Psoas muscle (tissue), 8 donors: ENCODE measurements at regions of chr2 and their contacts with region 1.

Region 1: GRCh38 chr2:67840460-67841068 is 222.2 kb downstream of the C1D start:
- DNase-seq: peak; percentile 53 to 83
- ATAC-seq: peak; percentile 89 to 99 (median 96)
- H3K4me3 ChIP-seq: no peak overlapping the region
- H3K27ac ChIP-seq: no peak overlapping the region
- H3K4me1 ChIP-seq: no peaks in the 10 kb centered on the region
- H3K27me3 ChIP-seq: no peaks in the 10 kb centered on the region
- CTCF ChIP-seq: peak; percentile 91

Region 2: GRCh38 chr2:66574701-66575624 is 1265.6 kb before region 1 on chr2:
- intact Hi-C with region 1: loop called (anchors 10 kb)
- DNase-seq: peak; percentile 56 to 65
- ATAC-seq: peak; percentile 55 to 73 (median 64)
- H3K4me3 ChIP-seq: peak overlapping the region; percentile 66
- H3K27ac ChIP-seq: no peak overlapping the region
- H3K4me1 ChIP-seq: peaks cover 15% of the 10 kb centered on the region
- H3K27me3 ChIP-seq: peaks cover 0 to 61% (median 28%) of the 10 kb centered on the region in 3 donors
- CTCF ChIP-seq: peak; percentile 31

Region 3: DNA sequence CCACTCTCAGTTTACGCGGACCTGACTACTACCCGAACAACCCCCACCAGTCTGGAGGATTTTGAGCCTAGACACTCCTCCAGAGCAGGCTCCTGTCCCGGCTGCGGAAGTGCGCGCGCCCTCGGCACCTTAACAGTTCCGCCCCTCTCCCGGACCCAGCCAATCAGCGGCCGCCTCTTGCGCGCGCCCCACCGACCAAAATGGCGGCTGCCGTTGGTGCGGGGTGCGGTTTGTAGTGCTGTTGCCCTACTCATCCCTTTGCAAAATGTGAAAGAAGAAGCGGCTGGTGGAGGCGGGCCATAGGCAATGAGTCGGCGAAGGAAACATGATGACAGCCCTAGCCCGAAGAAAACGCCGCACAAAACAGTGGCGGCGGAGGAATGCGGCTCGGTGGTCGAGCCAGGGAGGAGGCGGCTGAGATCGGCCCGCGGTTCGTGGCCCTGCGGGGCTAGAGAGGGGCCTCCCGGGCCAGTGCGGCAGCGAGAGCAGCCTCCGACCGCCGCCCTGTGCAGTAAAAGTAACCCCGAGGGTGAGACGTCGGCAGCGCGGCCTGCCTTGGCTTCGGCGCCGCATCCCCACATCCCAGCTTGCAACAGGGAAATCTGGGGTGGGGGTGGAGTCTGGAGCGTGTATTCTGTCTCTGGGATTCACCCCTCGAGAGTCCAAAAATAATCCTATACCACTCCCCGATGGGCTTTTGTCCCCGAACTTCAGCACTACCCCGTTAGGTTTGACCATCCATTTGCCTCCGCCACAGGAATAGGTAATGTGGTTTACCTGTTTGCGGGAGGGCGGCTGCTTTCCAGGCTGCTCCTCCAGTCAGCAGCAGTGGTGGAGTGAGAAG is 443.2 kb before region 1 on chr2 and contains the start of gene ETAA1:
- intact Hi-C with region 1: loop called in 1 of 2 experiments (anchors 10 kb)
- DNase-seq: peak; percentile 94 to 96
- ATAC-seq: peak; percentile 100
- H3K4me3 ChIP-seq: peak within 1 kb of the TSS; percentile 97
- H3K27ac ChIP-seq: peak within 1 kb of the TSS; percentile 91
- H3K4me1 ChIP-seq: peaks cover 4% of the 10 kb centered on the region
- H3K27me3 ChIP-seq: no peaks in the 10 kb centered on the region
- CTCF ChIP-seq: no peak
- total RNA-seq, gene ETAA1: 2.7 to 3.6 (median 2.9) TPM

Region 4: DNA sequence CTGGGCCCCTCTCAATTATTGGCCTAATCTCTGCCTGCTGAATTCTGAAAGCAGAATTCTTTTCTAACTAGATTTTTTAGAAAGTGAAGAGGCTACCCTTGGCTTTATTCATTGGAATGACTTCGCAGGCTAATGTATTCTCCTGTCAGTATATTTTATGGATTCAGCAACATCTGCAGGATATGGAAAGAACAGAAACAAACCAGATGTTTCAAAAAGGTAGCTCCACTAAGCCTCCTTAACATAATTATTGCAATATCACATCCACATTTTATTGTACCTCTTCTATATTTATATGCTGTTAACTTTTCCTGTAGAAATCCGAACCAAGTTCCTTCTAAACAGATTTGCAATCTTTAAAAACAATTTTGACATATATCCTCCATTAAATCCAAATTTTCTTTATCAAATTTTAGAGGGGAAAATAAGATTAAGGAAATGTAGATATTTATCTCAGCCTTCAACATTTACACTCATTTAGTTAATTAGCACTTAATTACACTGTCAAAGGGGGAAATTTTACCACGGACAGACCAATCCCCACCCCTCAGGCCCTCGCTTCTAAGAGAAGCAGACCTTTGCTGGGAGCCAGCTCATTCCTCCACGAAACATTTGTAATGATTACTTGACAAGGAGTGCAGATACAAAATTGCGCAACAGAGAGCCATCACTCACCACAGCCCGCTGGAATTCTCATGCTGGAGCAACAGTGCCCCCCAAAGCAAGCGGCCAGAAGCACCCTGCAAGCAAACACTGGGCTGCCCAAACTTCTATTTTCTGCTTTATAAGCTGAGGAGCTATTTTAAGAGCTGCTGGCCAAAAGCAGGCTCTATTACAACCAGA is 190.1 kb before region 1 on chr2:
- intact Hi-C with region 1: loop called (anchors 5 to 10 kb)
- DNase-seq: peak; percentile 81 to 89
- ATAC-seq: peak; percentile 82 to 92 (median 88)
- H3K4me3 ChIP-seq: no peak overlapping the region
- H3K27ac ChIP-seq: peak overlapping the region; percentile 80
- H3K4me1 ChIP-seq: peaks cover 26% of the 10 kb centered on the region
- H3K27me3 ChIP-seq: no peaks in the 10 kb centered on the region
- CTCF ChIP-seq: peak; percentile 68

Region 5: DNA sequence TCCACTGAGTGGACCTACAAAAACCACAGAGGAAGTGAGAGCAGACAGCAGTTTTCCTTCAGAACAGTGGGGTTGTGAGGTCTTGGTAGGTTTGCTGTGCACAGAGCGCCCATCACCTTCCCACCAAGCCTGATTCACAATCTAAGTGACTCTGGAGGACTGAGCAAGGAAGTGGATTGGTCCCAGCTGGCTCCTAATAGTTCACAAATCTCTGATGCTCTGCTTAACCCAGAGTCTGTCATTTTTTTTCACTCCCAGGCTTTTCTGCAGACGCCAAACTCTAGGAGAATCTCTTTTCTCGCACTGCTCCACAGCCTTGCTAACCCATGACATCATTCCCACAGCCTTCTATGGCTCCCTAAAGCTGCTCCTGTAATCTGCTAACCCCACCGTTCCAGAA is 58.1 kb before region 1 on chr2:
- intact Hi-C with region 1: no loop called
- DNase-seq: no peak
- ATAC-seq: no peak
- H3K4me3 ChIP-seq: no peak overlapping the region
- H3K27ac ChIP-seq: no peak overlapping the region
- H3K4me1 ChIP-seq: no peaks in the 10 kb centered on the region
- H3K27me3 ChIP-seq: peaks cover 0 to 2% (median 0%) of the 10 kb centered on the region in 3 donors
- CTCF ChIP-seq: no peak